Aorta (tissue), 5 donors: ENCODE measurements at regions of chr15 and their contacts with region 1.

Region 1: GRCh38 chr15:71066983-71067382 is 48.3 kb upstream of the THSD4 start:
- DNase-seq: no peak
- ATAC-seq: no peak
- H3K4me3 ChIP-seq: no peak overlapping the region
- H3K27ac ChIP-seq: no peak overlapping the region
- H3K4me1 ChIP-seq: no peaks in the 10 kb centered on the region
- H3K27me3 ChIP-seq: no peaks in the 10 kb centered on the region

Region 2: GRCh38 chr15:71024657-71025056 is 42.3 kb before region 1 on chr15:
- intact Hi-C with region 1: loop called in 1 of 2 experiments (anchors 5 kb)
- DNase-seq: no peak
- ATAC-seq: no peak
- H3K4me3 ChIP-seq: no peak overlapping the region
- H3K27ac ChIP-seq: no peak overlapping the region
- H3K4me1 ChIP-seq: no peaks in the 10 kb centered on the region
- H3K27me3 ChIP-seq: no peaks in the 10 kb centered on the region

Region 3: GRCh38 chr15:71079208-71080021 is 12.4 kb after region 1 on chr15:
- intact Hi-C with region 1: no loop called
- DNase-seq: peak; percentile 84 to 85
- ATAC-seq: peak; percentile 62
- H3K4me3 ChIP-seq: no peak overlapping the region
- H3K27ac ChIP-seq: peak overlapping the region; percentile 23 to 81
- H3K4me1 ChIP-seq: peaks cover 3 to 4% of the 10 kb centered on the region in 2 donors
- H3K27me3 ChIP-seq: no peaks in the 10 kb centered on the region